Right ventricle myocardium superior (tissue), 1 donor: ENCODE measurements at regions of chr14 and their contacts with region 1.

Region 1: GRCh38 chr14:92973261-92973797 is 50.4 kb downstream of the CHGA start:
- DNase-seq: peak; percentile 87
- ATAC-seq: peak; percentile 89

Region 2: GRCh38 chr14:93042968-93043940 is 69.9 kb after region 1 on chr14:
- intact Hi-C with region 1: loop called (anchors 5 kb)
- DNase-seq: peak; percentile 83
- ATAC-seq: peak; percentile 71

Region 3: GRCh38 chr14:93269341-93270068 is 296.2 kb after region 1 on chr14:
- intact Hi-C with region 1: no loop called
- DNase-seq: no peak
- ATAC-seq: peak; percentile 52